Calu3 (cell line): ENCODE measurements at regions of chr2 and their contacts with region 1.

Region 1: DNA sequence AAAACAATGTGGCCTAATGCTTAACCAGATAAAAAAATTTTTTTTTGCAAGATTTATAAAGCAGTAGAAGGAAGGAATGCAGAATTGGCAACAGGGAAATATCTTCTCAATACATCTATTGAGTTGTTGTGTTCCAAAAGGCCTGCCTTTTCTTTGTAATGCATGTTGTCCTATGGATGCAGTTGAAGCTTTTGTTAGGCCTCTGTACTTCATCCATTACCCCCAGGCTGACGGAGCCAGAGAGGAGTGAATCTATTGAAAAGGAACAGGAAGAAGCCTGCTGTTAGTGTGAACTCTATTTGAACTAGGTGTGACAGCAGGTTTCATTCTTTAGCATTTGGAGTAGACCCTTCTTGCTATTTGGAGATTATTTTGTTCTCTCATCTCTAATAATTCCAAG is 56.5 kb downstream of the MTX2 start:
- DNase-seq: no peak
- H3K4me3 Mint-ChIP-seq: no peak overlapping the region
- H3K27ac Mint-ChIP-seq: peak overlapping the region; percentile 68
- H3K4me1 Mint-ChIP-seq: peaks cover 25% of the 10 kb centered on the region
- H3K27me3 Mint-ChIP-seq: no peaks in the 10 kb centered on the region
- CTCF ChIP-seq: no peak

Region 2: DNA sequence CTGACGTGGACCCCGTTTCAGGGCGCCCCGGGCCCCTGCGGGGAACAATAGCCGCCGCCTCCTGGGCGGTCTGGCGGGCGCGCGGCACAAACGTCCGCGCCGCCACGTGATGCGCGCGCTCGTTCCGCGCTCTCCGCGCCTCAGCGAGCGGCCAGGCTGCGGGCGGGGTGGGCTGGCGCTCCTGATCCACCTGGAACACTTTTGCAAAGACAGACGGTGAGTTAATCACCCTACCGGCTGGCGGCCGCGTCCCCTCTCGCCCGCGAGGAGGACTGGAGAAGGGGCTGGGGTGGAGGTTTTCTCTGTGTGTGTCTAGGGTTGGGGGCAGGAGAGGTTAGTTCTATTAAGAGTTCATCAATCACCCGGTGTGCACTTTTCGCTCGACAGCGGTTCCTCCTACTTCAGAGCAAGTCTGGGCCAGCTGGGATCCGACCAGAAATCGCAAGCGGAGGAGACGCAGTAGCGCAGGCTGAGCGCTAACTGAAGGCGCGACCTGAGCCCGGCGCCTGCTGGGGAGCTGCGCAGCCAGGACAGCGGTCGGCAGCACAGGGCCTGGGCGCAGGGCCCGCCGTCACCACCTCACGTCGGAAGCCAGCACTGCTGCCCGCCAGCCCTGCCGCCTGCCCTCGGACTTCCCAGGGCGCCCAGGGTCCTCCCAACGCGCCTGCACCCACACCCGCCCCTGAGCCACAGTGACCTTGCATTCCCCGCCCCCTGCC is 147.5 kb before region 1 on chr2:
- CTCF ChIA-PET with region 1: no interaction called
- intact Hi-C with region 1: loop called (anchors 10 kb)
- DNase-seq: peak; percentile 43
- H3K4me3 Mint-ChIP-seq: peak overlapping the region; percentile 71
- H3K27ac Mint-ChIP-seq: no peak overlapping the region
- H3K4me1 Mint-ChIP-seq: peaks cover 11% of the 10 kb centered on the region
- H3K27me3 Mint-ChIP-seq: peaks cover 21% of the 10 kb centered on the region
- CTCF ChIP-seq: no peak

Region 3: GRCh38 chr2:176554101-176555048 is 228.6 kb after region 1 on chr2:
- CTCF ChIA-PET with region 1: no interaction called
- intact Hi-C with region 1: loop called (anchors 10 kb)
- DNase-seq: peak; percentile 49
- H3K4me3 Mint-ChIP-seq: peak overlapping the region; percentile 73
- H3K27ac Mint-ChIP-seq: peak overlapping the region; percentile 64
- H3K4me1 Mint-ChIP-seq: peaks cover 17% of the 10 kb centered on the region
- H3K27me3 Mint-ChIP-seq: no peaks in the 10 kb centered on the region
- CTCF ChIP-seq: peak; percentile 48

Region 4: GRCh38 chr2:176582990-176583481 is 257.3 kb after region 1 on chr2:
- CTCF ChIA-PET with region 1: no interaction called
- intact Hi-C with region 1: loop called (anchors 10 kb)
- DNase-seq: peak; percentile 64
- H3K4me3 Mint-ChIP-seq: peak overlapping the region; percentile 62
- H3K27ac Mint-ChIP-seq: peak overlapping the region; percentile 31
- H3K4me1 Mint-ChIP-seq: peaks cover 45% of the 10 kb centered on the region
- H3K27me3 Mint-ChIP-seq: no peaks in the 10 kb centered on the region
- CTCF ChIP-seq: no peak